Gastrocnemius medialis (tissue), 4 donors: ENCODE measurements at regions of chr13 and their contacts with region 1.

Region 1: GRCh38 chr13:33132644-33133440 is 116.6 kb downstream of the KL start:
- DNase-seq: no peak
- ATAC-seq: no peak
- H3K4me3 ChIP-seq: no peak overlapping the region
- H3K27ac ChIP-seq: peak overlapping the region in 1 of 4 donors; percentile 34
- H3K4me1 ChIP-seq: peaks cover 21 to 34% of the 10 kb centered on the region in 2 donors
- H3K27me3 ChIP-seq: no peaks in the 10 kb centered on the region
- CTCF ChIP-seq: no peak
- POLR2A ChIP-seq: no peak

Region 2: GRCh38 chr13:33147832-33148231 is 15.0 kb after region 1 on chr13:
- in situ Hi-C with region 1: no loop called
- intact Hi-C with region 1: loop called (anchors 2 kb)
- DNase-seq: no peak
- ATAC-seq: no peak
- H3K4me3 ChIP-seq: no peak overlapping the region
- H3K27ac ChIP-seq: no peak overlapping the region
- H3K4me1 ChIP-seq: peaks cover 8 to 22% of the 10 kb centered on the region in 2 donors
- H3K27me3 ChIP-seq: no peaks in the 10 kb centered on the region
- CTCF ChIP-seq: no peak
- POLR2A ChIP-seq: no peak